ENCODE measurements at regions of chr1 and their contacts with region 1.

Region 1: DNA sequence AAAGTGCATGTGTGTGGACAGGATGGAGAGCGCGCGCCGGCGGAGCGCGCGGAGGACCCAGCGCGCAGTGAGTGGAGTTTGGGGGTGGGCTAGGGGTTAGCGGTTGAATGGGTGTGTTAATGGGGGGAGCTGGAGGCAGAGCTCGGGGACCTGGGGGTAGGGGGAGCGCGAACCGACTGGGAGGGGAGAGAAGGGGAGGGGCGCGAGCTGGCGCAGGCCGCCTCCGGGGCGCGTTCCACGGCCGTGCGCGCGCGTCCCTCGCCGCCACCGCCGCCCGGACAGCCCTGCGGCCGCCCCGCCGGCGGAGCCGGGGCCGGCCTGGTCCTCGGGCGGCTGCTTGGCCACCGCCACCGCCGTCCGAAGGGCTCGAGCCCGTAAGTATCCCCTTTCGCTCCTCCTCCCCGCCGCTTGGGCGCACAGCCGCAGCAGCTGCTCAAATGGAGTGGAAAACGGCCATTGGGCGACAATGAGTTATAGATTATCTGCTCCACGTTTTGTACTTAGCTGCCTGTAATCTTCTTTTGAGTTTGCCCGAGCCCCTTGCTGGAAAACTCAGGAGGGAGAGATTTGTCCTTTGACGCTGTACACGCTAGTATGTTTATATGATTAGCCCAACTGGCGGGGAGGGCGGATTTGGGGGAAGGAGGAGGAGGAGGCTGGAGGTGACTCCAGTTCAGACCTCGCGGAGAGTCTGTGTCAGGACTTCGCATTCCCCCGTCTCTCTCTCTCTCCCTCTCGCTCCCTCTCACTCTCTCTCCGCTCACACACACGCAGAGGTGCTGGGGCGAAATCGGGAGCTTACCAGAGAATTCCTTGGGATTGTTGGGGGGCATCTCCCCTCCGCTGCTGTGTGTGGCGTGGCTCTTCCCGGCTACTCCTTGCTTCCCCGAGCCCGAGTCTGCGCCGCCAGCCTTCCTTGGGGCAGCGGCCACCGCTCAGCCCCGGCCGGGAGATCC is at the start of gene ADGRL2:
- DNase-seq: peak; percentile 60
- H3K4me3 ChIP-seq: peak within 1 kb of the TSS; percentile 48 to 84 (median 62)
- H3K27ac ChIP-seq: peak within 1 kb of the TSS; percentile 91 to 93 (median 92)
- H3K4me1 ChIP-seq: peaks cover 0 to 43% (median 0%) of the 10 kb centered on the region in 4 donors
- H3K27me3 ChIP-seq: peaks cover 75% of the 10 kb centered on the region
- CTCF ChIP-seq: no peak
- EP300 ChIP-seq: no peak
- POLR2A ChIP-seq: peak; percentile 39
- total RNA-seq, gene ADGRL2: 11.5 to 16.5 (median 14.1) TPM

Region 2: GRCh38 chr1:82867781-82868180 is 1066.8 kb after region 1 on chr1:
- in situ Hi-C with region 1: no loop called
- intact Hi-C with region 1: loop called (anchors 5 kb)
- DNase-seq: no peak
- H3K4me3 ChIP-seq: no peak overlapping the region
- H3K27ac ChIP-seq: no peak overlapping the region
- H3K4me1 ChIP-seq: no peaks in the 10 kb centered on the region
- H3K27me3 ChIP-seq: no peaks in the 10 kb centered on the region
- CTCF ChIP-seq: no peak
- EP300 ChIP-seq: no peak
- POLR2A ChIP-seq: no peak